Mammary epithelial cell (primary cell): ENCODE measurements at regions of chr7 and their contacts with region 1.

Region 1: GRCh38 chr7:17991866-17992648 is 35.6 kb downstream of the PRPS1L1 start:
- DNase-seq: no peak
- H3K4me3 ChIP-seq: no peak overlapping the region
- H3K27ac ChIP-seq: no peak overlapping the region
- H3K4me1 ChIP-seq: no peaks in the 10 kb centered on the region
- H3K27me3 ChIP-seq: no peaks in the 10 kb centered on the region
- CTCF ChIP-seq: peak; percentile 23 to 44

Region 2: DNA sequence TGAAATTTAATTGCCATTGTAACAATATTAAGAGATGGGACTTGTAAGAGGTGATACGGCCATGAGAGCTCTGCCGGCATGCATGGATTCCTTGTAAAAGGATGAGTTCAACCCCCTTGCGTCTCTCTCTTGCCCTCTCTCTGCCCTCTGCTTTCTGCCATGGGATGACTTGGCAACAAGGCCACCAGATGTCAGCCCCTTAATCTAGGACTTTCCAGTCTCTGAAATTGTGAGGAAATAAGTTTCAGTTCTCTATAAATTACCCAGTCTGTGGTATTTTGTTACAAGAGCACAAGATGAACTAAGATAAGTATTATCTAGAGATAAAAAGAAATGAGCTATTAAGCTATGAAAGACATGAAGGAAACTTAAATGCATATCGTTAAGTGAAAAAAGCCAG is 839.3 kb before region 1 on chr7:
- CTCF ChIA-PET with region 1: no interaction called
- dilution Hi-C with region 1: no loop called
- in situ Hi-C with region 1: no loop called
- intact Hi-C with region 1: no loop called
- DNase-seq: no peak
- H3K4me3 ChIP-seq: no peak overlapping the region
- H3K27ac ChIP-seq: no peak overlapping the region
- H3K4me1 ChIP-seq: no peaks in the 10 kb centered on the region
- H3K27me3 ChIP-seq: no peaks in the 10 kb centered on the region
- CTCF ChIP-seq: no peak

Region 3: DNA sequence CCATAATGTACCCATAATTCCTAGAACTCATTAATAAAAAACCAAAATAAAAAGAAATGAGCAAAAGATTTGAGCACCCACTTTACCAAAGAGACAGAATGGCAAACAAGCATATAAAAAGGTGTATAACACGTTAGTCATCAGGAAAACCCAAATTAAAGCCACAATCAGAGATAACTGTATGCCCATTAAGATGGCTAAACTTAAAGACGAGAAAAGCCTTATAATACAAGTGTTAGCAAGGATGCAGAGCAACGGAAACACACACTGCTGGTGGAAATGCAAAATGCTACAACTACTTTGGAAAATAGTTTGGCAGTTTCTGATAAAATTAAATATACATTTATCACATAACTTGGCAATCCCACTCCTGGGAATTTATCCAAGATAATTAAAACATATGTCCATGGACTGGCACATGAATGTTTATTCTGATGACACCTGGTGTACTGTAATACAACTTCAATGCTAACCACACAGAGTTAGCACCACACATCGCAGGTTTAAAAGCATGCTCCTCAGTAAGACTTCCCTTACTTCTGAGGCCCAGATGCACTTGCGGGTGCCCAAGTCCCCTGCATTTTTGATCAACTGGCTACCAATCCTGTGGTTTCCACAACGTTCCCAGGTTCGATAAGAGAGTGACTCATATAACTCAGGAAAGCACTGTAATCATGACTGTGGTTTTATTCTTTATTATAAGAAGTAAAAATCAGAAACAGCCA is 210.4 kb before region 1 on chr7:
- CTCF ChIA-PET with region 1: interaction called, 11 read pairs
- dilution Hi-C with region 1: no loop called
- in situ Hi-C with region 1: no loop called
- intact Hi-C with region 1: no loop called
- DNase-seq: peak; percentile 61
- H3K4me3 ChIP-seq: no peak overlapping the region
- H3K27ac ChIP-seq: no peak overlapping the region
- H3K4me1 ChIP-seq: peaks cover 18% of the 10 kb centered on the region
- H3K27me3 ChIP-seq: no peaks in the 10 kb centered on the region
- CTCF ChIP-seq: no peak